OCI-LY7 (cell line): ENCODE measurements at regions of chr9 and their contacts with region 1.

Region 1: GRCh38 chr9:121439711-121440664 is 59.7 kb downstream of the GGTA1 start:
- DNase-seq: no peak
- H3K4me3 ChIP-seq: no peak overlapping the region
- H3K27ac ChIP-seq: no peak overlapping the region
- H3K4me1 ChIP-seq: no peaks in the 10 kb centered on the region
- CTCF ChIP-seq: peak; percentile 34; the same call in 1 of the 2 replicates

Region 2: DNA sequence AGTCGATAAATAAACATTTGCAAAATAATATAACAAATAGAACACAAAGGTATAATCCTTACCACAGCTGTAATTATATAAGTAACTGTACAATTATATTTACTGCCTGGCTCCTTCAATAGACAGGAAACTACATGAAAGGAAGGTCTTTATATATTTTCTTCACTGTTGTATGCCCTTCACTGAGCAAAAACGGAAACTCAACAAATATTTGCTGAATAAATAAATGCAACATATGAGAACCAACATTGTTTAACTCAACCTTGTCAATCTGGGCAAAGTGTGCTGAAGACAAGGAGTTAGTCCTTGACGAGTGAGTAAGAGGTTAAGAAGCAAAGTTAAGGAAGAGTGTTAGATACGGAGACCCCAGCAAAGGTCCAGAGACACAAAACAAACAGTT is 619.9 kb before region 1 on chr9:
- CTCF ChIA-PET with region 1: no interaction called
- POLR2A ChIA-PET with region 1: no interaction called
- intact Hi-C with region 1: loop called (anchors 5 kb)
- DNase-seq: no peak
- H3K4me3 ChIP-seq: no peak overlapping the region
- H3K27ac ChIP-seq: no peak overlapping the region
- H3K4me1 ChIP-seq: no peaks in the 10 kb centered on the region
- CTCF ChIP-seq: no peak